Lower lobe of right lung (tissue), 2 donors: ENCODE measurements at regions of chr9 and their contacts with region 1.

Region 1: DNA sequence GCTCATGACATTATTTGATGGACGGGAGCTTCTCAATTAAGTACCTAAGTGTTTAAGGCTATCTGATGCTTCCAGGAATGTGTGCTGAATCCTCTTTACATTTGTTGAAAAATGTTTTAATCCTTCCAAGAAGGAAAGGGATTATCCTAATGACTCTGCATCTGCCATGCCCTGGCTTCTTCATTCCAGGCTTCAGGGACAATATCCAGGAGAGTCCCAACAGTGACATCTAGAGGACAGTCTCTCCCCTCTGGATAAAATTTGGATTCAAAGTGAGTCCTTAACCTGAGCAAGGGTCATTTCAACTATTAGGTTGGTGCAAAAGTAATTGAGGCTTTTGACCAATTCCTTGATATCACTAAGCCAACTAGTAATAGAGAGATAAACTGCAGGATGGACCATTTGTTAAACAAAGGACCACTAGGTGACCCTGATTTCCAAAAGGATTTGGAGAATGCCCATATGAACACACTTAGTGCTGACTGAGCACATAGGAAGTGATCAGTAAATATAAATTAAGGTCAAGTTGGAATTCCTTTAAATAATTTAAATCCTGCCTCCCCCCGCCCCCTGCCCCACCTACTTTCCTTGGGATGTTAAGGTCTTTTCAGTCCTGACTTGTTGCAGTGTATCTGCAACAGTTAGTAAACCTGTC is 19.1 kb downstream of the TNFSF8 start:
- DNase-seq: no peak
- ATAC-seq: peak; percentile 62 to 69
- H3K4me3 ChIP-seq: no peak overlapping the region
- H3K27ac ChIP-seq: no peak overlapping the region
- H3K4me1 ChIP-seq: peaks cover 32% of the 10 kb centered on the region
- H3K27me3 ChIP-seq: no peaks in the 10 kb centered on the region
- CTCF ChIP-seq: peak; percentile 73

Region 2: DNA sequence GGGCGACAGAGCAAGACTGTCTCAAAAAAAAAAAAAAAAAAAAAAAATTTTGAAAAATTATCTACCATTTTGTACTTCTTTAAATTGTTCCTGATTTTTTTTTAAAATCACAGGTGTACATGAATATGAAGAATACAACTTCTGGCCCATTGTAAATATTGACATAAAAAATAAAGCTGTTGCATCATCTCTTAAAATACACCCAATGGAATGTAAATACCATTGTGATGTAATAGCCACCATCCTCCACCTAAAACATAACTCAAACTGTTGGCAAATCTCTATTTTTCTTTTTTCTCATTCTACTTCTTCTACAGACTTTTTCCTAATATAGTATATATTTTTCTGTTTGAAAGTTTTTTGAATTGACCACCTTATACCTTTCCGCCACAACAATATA is 168.3 kb before region 1 on chr9:
- intact Hi-C with region 1: loop called (anchors 5 kb)
- DNase-seq: no peak
- ATAC-seq: no peak
- H3K4me3 ChIP-seq: no peak overlapping the region
- H3K27ac ChIP-seq: no peak overlapping the region
- H3K4me1 ChIP-seq: peaks cover 8% of the 10 kb centered on the region
- H3K27me3 ChIP-seq: no peaks in the 10 kb centered on the region
- CTCF ChIP-seq: no peak

Region 3: GRCh38 chr9:115213818-115214334 is 302.6 kb after region 1 on chr9:
- intact Hi-C with region 1: no loop called
- DNase-seq: no peak
- ATAC-seq: peak; percentile 43 to 63
- H3K4me3 ChIP-seq: no peak overlapping the region
- H3K27ac ChIP-seq: no peak overlapping the region
- H3K4me1 ChIP-seq: peaks cover 16% of the 10 kb centered on the region
- H3K27me3 ChIP-seq: no peaks in the 10 kb centered on the region
- CTCF ChIP-seq: no peak